CD4-positive, alpha-beta T cell (primary cell): ENCODE measurements at regions of chr15 and their contacts with region 1.

Region 1: DNA sequence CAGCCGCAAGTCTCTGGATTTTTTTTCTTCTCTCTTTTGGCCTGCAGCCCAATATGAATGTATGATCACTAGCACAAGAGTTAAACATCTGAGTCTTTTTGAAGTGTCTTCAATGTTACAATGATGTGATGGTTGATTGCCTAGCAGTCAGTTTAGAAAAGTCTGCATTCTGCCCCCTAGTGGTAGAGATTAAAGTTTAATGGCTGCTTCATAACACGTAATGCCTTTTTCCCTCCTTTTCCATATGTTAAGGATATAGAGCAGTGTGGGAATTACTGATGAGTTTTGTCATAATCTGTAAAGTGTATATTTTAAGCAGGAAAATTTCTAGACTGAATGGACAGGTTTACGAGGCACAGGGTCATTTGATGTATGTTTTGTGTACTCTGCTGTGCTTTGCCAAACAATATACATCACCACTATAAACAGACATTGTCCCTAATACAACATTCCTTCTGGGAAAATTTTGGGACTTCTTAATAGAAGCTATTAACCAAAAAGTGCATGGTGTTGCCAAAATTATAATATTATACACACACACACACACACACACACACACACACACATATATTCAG is 1038.5 kb upstream of the NR2F2 start:
- DNase-seq: peak in 3 of 14 experiments; percentile 30 to 32 (median 31)
- ATAC-seq: no peak
- H3K4me3 ChIP-seq: no peak overlapping the region
- H3K4me3 Mint-ChIP-seq: no peak overlapping the region
- H3K27ac ChIP-seq: no peak overlapping the region
- H3K27ac Mint-ChIP-seq: no peak overlapping the region
- H3K4me1 ChIP-seq: no peaks in the 10 kb centered on the region
- H3K4me1 Mint-ChIP-seq: no peaks in the 10 kb centered on the region
- H3K27me3 ChIP-seq: peaks cover 0 to 19% of the 10 kb centered on the region in 2 experiments
- H3K27me3 Mint-ChIP-seq: peaks cover 57% of the 10 kb centered on the region
- CTCF ChIP-seq: peak; percentile 58

Region 2: DNA sequence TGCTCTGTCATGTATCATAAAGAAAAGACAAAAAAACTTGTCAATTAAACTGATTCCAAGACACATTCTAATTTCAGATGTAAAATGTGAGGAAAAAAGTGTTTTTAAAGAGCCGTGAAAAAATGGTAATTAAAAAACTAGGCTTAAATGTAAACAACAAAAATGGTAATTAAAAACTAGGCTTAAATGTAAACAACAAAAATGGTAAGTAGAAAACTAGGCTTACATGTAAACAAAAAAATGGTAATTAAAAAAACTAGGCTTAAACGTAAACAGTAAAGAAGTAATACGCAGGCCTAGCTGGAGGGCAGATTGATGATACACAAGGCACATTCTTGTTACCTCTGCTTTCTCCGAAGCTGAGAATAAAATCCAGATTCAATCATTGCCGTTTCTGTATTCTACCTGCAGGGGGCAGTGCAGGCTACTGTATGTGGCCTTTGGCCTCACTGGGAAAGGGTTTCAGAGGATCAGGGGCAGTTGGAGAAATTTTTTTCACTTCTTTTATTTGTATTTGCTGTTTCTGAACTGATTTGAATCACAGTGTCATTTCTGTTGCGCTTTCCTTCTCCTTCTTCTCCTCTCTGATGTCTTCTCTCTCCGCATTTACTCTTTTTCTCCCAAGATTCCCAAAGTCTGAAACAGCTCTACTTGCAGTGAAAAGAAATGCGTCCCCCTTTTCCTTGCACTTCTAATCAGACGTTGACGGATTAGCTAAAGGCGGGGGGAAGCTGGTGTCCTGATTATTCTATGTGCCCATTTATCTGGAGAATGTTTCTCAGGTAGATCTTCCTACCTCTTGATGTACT is 1127.8 kb before region 1 on chr15:
- CTCF ChIA-PET with region 1: no interaction called
- POLR2A ChIA-PET with region 1: no interaction called
- intact Hi-C with region 1: loop called (anchors 5 kb)
- DNase-seq: peak in 13 of 14 experiments; percentile 6 to 73 (median 38)
- ATAC-seq: no peak
- H3K4me3 ChIP-seq: no peak overlapping the region
- H3K4me3 Mint-ChIP-seq: no peak overlapping the region
- H3K27ac ChIP-seq: no peak overlapping the region
- H3K27ac Mint-ChIP-seq: no peak overlapping the region
- H3K4me1 ChIP-seq: no peaks in the 10 kb centered on the region
- H3K4me1 Mint-ChIP-seq: no peaks in the 10 kb centered on the region
- H3K27me3 ChIP-seq: no peaks in the 10 kb centered on the region
- H3K27me3 Mint-ChIP-seq: no peaks in the 10 kb centered on the region
- CTCF ChIP-seq: peak; percentile 76

Region 3: DNA sequence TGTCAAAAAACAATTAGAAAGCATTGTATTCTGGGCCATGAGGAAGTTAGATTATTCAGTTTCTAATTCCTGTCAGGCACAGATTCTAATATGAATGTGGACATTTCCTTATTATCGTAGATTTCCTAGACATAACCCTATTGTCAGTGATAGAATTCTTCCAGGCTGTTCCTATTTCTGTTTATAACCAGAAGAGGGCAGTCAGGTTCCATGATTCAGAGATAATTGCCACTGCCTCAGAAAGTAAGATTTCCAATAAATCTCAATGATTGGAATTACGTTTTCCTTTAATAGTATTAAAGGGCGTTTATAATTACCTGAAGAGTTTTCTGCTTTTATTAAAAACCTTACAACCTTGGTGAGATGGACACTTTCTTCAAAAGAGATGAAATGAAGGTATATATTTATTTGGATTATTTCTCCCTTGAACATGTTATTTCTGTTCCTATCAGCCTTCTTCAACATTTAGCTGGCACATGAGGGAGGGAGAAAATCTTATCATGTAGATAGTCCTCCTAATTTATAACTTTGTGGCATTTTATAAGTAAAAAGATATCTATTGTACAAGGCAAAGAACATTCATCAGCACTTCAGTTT is 621.4 kb before region 1 on chr15:
- CTCF ChIA-PET with region 1: no interaction called
- POLR2A ChIA-PET with region 1: no interaction called
- intact Hi-C with region 1: loop called in 1 of 2 experiments (anchors 5 kb)
- DNase-seq: peak in 3 of 14 experiments; percentile 13 to 30 (median 20)
- ATAC-seq: no peak
- H3K4me3 ChIP-seq: no peak overlapping the region
- H3K4me3 Mint-ChIP-seq: no peak overlapping the region
- H3K27ac ChIP-seq: no peak overlapping the region
- H3K27ac Mint-ChIP-seq: no peak overlapping the region
- H3K4me1 ChIP-seq: no peaks in the 10 kb centered on the region
- H3K4me1 Mint-ChIP-seq: no peaks in the 10 kb centered on the region
- H3K27me3 ChIP-seq: peaks cover 0 to 2% of the 10 kb centered on the region in 2 experiments
- H3K27me3 Mint-ChIP-seq: peaks cover 40% of the 10 kb centered on the region
- CTCF ChIP-seq: peak; percentile 62